CD4-positive, alpha-beta T cell (primary cell): ENCODE measurements at regions of chr2 and their contacts with region 1.

Region 1: DNA sequence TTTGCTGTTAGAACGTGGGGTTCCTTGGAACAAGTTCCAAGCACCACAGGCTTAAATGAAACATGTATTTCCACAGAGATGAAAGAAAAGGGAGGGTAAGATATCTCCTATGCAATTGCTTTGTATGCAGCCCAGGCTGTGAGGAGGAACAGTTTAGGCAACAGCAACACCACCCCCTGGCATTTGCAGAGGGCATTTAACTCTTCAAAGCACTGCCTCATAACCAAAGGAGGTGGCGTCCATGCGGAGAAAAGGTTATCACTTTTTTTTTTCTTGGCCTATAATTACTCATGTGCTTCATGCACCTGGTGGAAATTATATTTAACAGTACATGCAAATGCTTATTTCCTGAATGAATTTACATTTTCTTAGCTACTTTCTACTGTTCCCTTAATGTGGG is 286.0 kb downstream of the LPIN1 start:
- DNase-seq: no peak
- ATAC-seq: no peak
- H3K4me3 ChIP-seq: no peak overlapping the region
- H3K4me3 Mint-ChIP-seq: no peak overlapping the region
- H3K27ac ChIP-seq: no peak overlapping the region
- H3K27ac Mint-ChIP-seq: no peak overlapping the region
- H3K4me1 ChIP-seq: peaks cover 20% of the 10 kb centered on the region
- H3K4me1 Mint-ChIP-seq: peaks cover 34% of the 10 kb centered on the region
- H3K27me3 ChIP-seq: no peaks in the 10 kb centered on the region
- H3K27me3 Mint-ChIP-seq: no peaks in the 10 kb centered on the region
- CTCF ChIP-seq: no peak

Region 2: GRCh38 chr2:12044857-12045256 is 12.5 kb after region 1 on chr2:
- CTCF ChIA-PET with region 1: interaction called, 4 read pairs
- POLR2A ChIA-PET with region 1: interaction called, 39 read pairs
- intact Hi-C with region 1: no loop called
- DNase-seq: peak in 12 of 14 experiments; percentile 7 to 74 (median 46)
- ATAC-seq: peak; percentile 92
- H3K4me3 ChIP-seq: no peak overlapping the region
- H3K4me3 Mint-ChIP-seq: peak overlapping the region; percentile 11
- H3K27ac ChIP-seq: peak overlapping the region in 1 of 2 donors; percentile 22
- H3K27ac Mint-ChIP-seq: peak overlapping the region; percentile 42
- H3K4me1 ChIP-seq: peaks cover 44% of the 10 kb centered on the region
- H3K4me1 Mint-ChIP-seq: peaks cover 83% of the 10 kb centered on the region
- H3K27me3 ChIP-seq: no peaks in the 10 kb centered on the region
- H3K27me3 Mint-ChIP-seq: no peaks in the 10 kb centered on the region
- CTCF ChIP-seq: peak; percentile 17